ENCODE measurements at regions of chr7 and their contacts with region 1.

Region 1: GRCh38 chr7:105752671-105753275 is 123.6 kb downstream of the ATXN7L1 start:
- DNase-seq: no peak
- H3K4me3 Mint-ChIP-seq: no peak overlapping the region
- H3K27ac Mint-ChIP-seq: no peak overlapping the region
- H3K4me1 Mint-ChIP-seq: no peaks in the 10 kb centered on the region
- H3K27me3 Mint-ChIP-seq: no peaks in the 10 kb centered on the region

Region 2: GRCh38 chr7:105764506-105764905 is 11.7 kb after region 1 on chr7:
- CTCF ChIA-PET with region 1: interaction called, 11 read pairs
- POLR2A ChIA-PET with region 1: no interaction called
- DNase-seq: no peak
- H3K4me3 Mint-ChIP-seq: no peak overlapping the region
- H3K27ac Mint-ChIP-seq: no peak overlapping the region
- H3K4me1 Mint-ChIP-seq: peaks cover 47% of the 10 kb centered on the region
- H3K27me3 Mint-ChIP-seq: peaks cover 2% of the 10 kb centered on the region